Caco-2 (cell line): ENCODE measurements at regions of chr3 and their contacts with region 1.

Region 1: GRCh38 chr3:143972505-143973255 is 1.1 kb downstream of the DIPK2A start:
- DNase-seq: peak; percentile 69 to 71
- H3K4me3 ChIP-seq: peak overlapping the region; percentile 96
- H3K4me3 Mint-ChIP-seq: peak overlapping the region; percentile 89
- H3K27ac Mint-ChIP-seq: peak overlapping the region; percentile 98
- H3K4me1 ChIP-seq: peaks cover 26% of the 10 kb centered on the region
- H3K4me1 Mint-ChIP-seq: peaks cover 7% of the 10 kb centered on the region
- H3K27me3 ChIP-seq: no peaks in the 10 kb centered on the region
- H3K27me3 Mint-ChIP-seq: no peaks in the 10 kb centered on the region
- CTCF ChIP-seq: peak in 1 of 2 experiments; percentile 23

Region 2: DNA sequence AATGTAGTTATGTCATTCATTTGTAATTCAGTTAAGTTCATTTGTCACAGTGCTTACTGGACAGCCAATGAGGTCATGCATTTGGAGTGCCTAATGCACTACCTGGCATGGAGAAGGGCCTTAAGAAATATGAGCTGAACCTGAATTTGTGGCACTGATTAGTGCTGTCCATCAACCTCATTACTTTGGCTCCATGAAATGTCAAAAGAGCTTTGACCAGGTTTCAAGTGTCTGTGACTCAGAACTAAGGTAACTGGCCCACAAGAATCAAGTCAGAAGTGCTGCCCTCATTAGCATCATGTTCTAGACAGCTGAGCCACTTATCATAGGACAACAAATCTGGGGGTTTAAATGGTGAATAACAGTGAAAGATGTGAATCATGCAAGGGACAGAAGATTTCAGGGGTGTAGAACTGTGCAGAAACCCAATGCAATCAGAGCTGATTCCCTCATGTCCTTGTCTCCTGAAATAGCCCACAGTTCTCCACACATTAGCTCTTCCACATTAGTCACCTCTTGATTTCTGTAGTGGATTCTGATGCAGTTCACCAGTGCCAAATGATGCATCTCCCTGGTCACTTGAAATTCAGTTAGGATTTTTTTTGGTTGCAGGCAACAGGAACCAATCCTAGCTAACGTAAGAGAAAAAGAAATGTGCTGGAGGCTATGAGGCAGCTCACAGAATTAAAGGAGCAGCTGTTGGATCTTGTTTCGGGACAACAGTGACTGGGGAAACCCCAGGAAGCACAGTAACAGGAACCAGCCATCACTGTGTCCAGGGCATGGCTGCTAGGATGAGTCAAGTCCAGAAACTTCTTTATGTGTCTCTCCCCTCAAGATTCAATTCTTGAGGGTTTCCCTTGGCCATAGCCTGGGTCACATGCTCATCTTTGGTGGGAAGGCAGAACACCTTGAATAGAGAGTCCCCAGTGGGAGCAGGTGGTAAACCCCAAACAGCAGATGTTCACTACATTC is 814.4 kb before region 1 on chr3:
- CTCF ChIA-PET with region 1: no interaction called
- POLR2A ChIA-PET with region 1: no interaction called
- intact Hi-C with region 1: no loop called
- DNase-seq: no peak
- H3K4me3 ChIP-seq: no peak overlapping the region
- H3K4me3 Mint-ChIP-seq: no peak overlapping the region
- H3K27ac Mint-ChIP-seq: no peak overlapping the region
- H3K4me1 ChIP-seq: no peaks in the 10 kb centered on the region
- H3K4me1 Mint-ChIP-seq: no peaks in the 10 kb centered on the region
- H3K27me3 ChIP-seq: no peaks in the 10 kb centered on the region
- H3K27me3 Mint-ChIP-seq: peaks cover 8% of the 10 kb centered on the region
- CTCF ChIP-seq: no peak

Region 3: GRCh38 chr3:143991713-143992112 is 19.0 kb after region 1 on chr3:
- CTCF ChIA-PET with region 1: no interaction called
- POLR2A ChIA-PET with region 1: no interaction called
- intact Hi-C with region 1: no loop called
- DNase-seq: no peak
- H3K4me3 ChIP-seq: no peak overlapping the region
- H3K4me3 Mint-ChIP-seq: no peak overlapping the region
- H3K27ac Mint-ChIP-seq: no peak overlapping the region
- H3K4me1 ChIP-seq: peaks cover 15% of the 10 kb centered on the region; the same call in 1 of the 2 replicates
- H3K4me1 Mint-ChIP-seq: peaks cover 11% of the 10 kb centered on the region
- H3K27me3 ChIP-seq: no peaks in the 10 kb centered on the region
- H3K27me3 Mint-ChIP-seq: no peaks in the 10 kb centered on the region
- CTCF ChIP-seq: no peak

Region 4: DNA sequence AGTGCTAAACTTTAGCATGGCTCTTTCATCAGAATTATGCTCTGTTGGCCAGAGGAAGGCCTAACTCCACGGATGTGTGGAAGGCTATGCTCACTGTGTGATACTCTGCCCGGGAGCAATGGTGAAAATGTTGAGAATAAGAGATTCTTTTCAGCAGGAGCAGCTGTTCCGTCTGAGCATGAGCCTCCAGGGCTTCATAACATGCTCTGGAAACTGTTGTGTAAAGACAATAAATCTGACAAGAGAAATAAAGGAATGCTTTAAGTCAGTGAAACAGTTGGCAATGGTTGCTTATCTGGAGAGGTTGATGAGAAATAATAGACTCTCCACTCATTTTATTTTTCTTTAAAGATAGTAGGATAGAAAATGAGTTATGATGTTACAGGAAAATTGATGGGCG is 268.7 kb after region 1 on chr3:
- CTCF ChIA-PET with region 1: no interaction called
- POLR2A ChIA-PET with region 1: no interaction called
- intact Hi-C with region 1: no loop called
- DNase-seq: no peak
- H3K4me3 ChIP-seq: no peak overlapping the region
- H3K4me3 Mint-ChIP-seq: no peak overlapping the region
- H3K27ac Mint-ChIP-seq: no peak overlapping the region
- H3K4me1 ChIP-seq: no peaks in the 10 kb centered on the region
- H3K4me1 Mint-ChIP-seq: no peaks in the 10 kb centered on the region
- H3K27me3 ChIP-seq: no peaks in the 10 kb centered on the region
- H3K27me3 Mint-ChIP-seq: no peaks in the 10 kb centered on the region
- CTCF ChIP-seq: no peak

Region 5: DNA sequence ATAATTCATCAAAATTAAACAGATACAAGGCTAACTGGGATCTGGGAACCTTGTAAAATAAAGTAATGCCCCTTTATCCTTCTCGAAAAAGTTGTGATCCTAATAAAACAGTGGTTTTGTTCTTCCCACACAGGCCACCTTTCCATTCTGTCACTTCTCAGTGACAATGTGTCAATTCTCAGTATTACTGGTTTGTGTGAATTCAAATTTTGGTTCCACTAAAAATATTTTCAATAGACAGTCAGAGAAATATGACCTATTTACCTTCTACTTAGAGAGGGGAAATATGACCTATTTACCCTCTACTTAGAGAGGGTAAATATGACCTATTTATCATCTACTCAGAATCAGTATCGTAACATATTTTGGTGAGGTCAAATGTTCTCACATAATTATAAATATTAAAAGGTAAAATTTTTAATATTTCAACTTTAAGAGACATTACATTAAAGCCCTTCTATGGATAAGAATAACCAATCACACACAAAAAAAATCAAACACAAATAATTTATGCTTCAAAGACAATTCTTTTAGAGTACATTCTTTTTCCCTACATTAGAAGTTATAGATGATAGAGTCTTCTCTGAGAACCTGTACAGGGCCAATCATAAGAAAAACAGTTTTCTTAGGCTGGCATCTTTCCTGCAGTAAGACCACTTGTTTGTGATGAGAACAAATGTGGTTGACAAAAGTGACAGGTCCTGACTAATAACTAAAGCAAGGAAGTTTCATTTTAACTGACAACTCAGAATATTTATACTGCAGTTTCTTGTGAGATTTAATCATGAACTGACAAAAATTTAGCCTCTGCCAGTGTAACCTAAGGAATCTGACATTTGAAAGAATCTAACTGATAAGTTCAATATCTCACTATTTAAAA is 322.2 kb after region 1 on chr3:
- CTCF ChIA-PET with region 1: no interaction called
- POLR2A ChIA-PET with region 1: no interaction called
- intact Hi-C with region 1: loop called (anchors 5 kb)
- DNase-seq: no peak
- H3K4me3 ChIP-seq: no peak overlapping the region
- H3K4me3 Mint-ChIP-seq: peak overlapping the region; percentile 50
- H3K27ac Mint-ChIP-seq: peak overlapping the region; percentile 68
- H3K4me1 ChIP-seq: peaks cover 38% of the 10 kb centered on the region
- H3K4me1 Mint-ChIP-seq: peaks cover 21% of the 10 kb centered on the region
- H3K27me3 ChIP-seq: no peaks in the 10 kb centered on the region
- H3K27me3 Mint-ChIP-seq: no peaks in the 10 kb centered on the region
- CTCF ChIP-seq: no peak

Region 6: GRCh38 chr3:144362126-144362525 is 389.4 kb after region 1 on chr3:
- CTCF ChIA-PET with region 1: no interaction called
- POLR2A ChIA-PET with region 1: interaction called, 3 read pairs
- intact Hi-C with region 1: loop called (anchors 5 kb)
- DNase-seq: no peak
- H3K4me3 ChIP-seq: no peak overlapping the region
- H3K4me3 Mint-ChIP-seq: no peak overlapping the region
- H3K27ac Mint-ChIP-seq: peak overlapping the region; percentile 54
- H3K4me1 ChIP-seq: peaks cover 74% of the 10 kb centered on the region
- H3K4me1 Mint-ChIP-seq: peaks cover 45% of the 10 kb centered on the region
- H3K27me3 ChIP-seq: no peaks in the 10 kb centered on the region
- H3K27me3 Mint-ChIP-seq: no peaks in the 10 kb centered on the region
- CTCF ChIP-seq: no peak

Region 7: GRCh38 chr3:144521131-144521530 is 548.5 kb after region 1 on chr3:
- CTCF ChIA-PET with region 1: no interaction called
- POLR2A ChIA-PET with region 1: interaction called, 13 read pairs
- intact Hi-C with region 1: no loop called
- DNase-seq: no peak
- H3K4me3 ChIP-seq: no peak overlapping the region
- H3K4me3 Mint-ChIP-seq: no peak overlapping the region
- H3K27ac Mint-ChIP-seq: no peak overlapping the region
- H3K4me1 ChIP-seq: no peaks in the 10 kb centered on the region
- H3K4me1 Mint-ChIP-seq: no peaks in the 10 kb centered on the region
- H3K27me3 ChIP-seq: no peaks in the 10 kb centered on the region
- H3K27me3 Mint-ChIP-seq: no peaks in the 10 kb centered on the region
- CTCF ChIP-seq: no peak

Region 8: DNA sequence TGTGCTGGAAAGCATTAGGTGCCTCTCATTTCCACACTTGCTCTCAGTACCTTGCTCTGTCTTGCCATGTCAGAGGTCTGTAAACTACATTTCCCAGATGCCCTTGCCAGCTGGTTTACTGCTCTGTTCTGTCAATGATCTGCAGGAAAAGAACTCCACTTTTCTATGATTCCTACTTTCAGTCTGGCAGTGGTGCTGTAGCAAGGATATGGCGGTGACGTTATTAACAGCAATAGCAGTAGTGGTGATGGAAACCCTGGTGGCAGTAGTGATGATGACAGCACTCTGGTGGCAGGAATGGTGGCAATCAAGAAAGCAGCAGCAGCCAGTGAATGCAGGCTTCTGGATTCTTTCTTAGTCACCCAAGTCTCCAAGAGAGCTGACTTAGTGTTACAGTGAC is 664.2 kb after region 1 on chr3:
- CTCF ChIA-PET with region 1: interaction called, 3 read pairs
- POLR2A ChIA-PET with region 1: interaction called, 4 read pairs
- intact Hi-C with region 1: loop called (anchors 2 kb)
- DNase-seq: peak; percentile 72 to 73
- H3K4me3 ChIP-seq: no peak overlapping the region
- H3K4me3 Mint-ChIP-seq: peak overlapping the region; percentile 22
- H3K27ac Mint-ChIP-seq: no peak overlapping the region
- H3K4me1 ChIP-seq: no peaks in the 10 kb centered on the region
- H3K4me1 Mint-ChIP-seq: no peaks in the 10 kb centered on the region
- H3K27me3 ChIP-seq: no peaks in the 10 kb centered on the region
- H3K27me3 Mint-ChIP-seq: no peaks in the 10 kb centered on the region
- CTCF ChIP-seq: peak; percentile 28 to 56

Region 9: DNA sequence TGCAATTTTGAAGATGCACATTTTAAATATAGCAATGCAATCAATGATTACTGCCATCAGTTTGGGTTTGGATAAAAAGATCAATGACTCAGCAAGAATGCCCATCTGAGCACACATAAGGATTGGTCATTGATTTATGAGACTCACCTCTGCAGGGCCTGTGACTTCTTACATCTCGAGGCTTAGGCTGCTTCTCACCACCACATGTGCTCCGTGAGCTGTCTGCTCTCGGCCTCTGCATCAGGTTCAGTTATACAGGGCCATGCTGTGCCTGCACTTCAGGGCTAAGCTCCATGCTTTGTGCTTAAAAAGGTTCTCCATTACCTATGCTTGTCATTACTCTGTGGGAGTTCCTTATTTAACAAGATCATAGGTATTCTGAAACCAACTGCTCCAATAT is 886.5 kb after region 1 on chr3:
- CTCF ChIA-PET with region 1: no interaction called
- POLR2A ChIA-PET with region 1: no interaction called
- intact Hi-C with region 1: loop called (anchors 10 kb)
- DNase-seq: no peak
- H3K4me3 ChIP-seq: no peak overlapping the region
- H3K4me3 Mint-ChIP-seq: no peak overlapping the region
- H3K27ac Mint-ChIP-seq: no peak overlapping the region
- H3K4me1 ChIP-seq: no peaks in the 10 kb centered on the region
- H3K4me1 Mint-ChIP-seq: no peaks in the 10 kb centered on the region
- H3K27me3 ChIP-seq: no peaks in the 10 kb centered on the region
- H3K27me3 Mint-ChIP-seq: no peaks in the 10 kb centered on the region
- CTCF ChIP-seq: no peak